ENCODE measurements at regions of chr10 and their contacts with region 1.

Region 1: GRCh38 chr10:45672181-45673073 is at the start of gene ZFAND4:
- DNase-seq: peak; percentile 82
- ATAC-seq: peak; percentile 97
- H3K4me3 ChIP-seq: peak within 1 kb of the TSS; percentile 82
- H3K27ac ChIP-seq: peak within 1 kb of the TSS; percentile 54
- H3K4me1 ChIP-seq: peaks cover 7% of the 10 kb centered on the region
- H3K27me3 ChIP-seq: no peaks in the 10 kb centered on the region
- CTCF ChIP-seq: peak; percentile 56 to 84 (median 64); a peak in 4 of 6 replicates
- EP300 ChIP-seq: peak in 1 of 2 experiments; percentile 35; a peak in 1 of 4 replicates
- POLR2A ChIP-seq: peak; percentile 86
- RAD21 ChIP-seq: peak; percentile 63
- polyA plus RNA-seq, gene ZFAND4: 4.7 to 6.2 TPM

Region 2: GRCh38 chr10:45000752-45001380 is 671.6 kb before region 1 on chr10 and contains the start of gene ZNF22:
- CTCF ChIA-PET with region 1: no interaction called
- POLR2A ChIA-PET with region 1: no interaction called
- RAD21 ChIA-PET with region 1: no interaction called
- SMC1A ChIA-PET with region 1: no interaction called
- in situ Hi-C with region 1: no loop called
- intact Hi-C with region 1: loop called (anchors 5 kb)
- DNase-seq: no peak
- ATAC-seq: peak; percentile 82
- H3K4me3 ChIP-seq: peak within 1 kb of the TSS; percentile 72
- H3K27ac ChIP-seq: peak within 1 kb of the TSS; percentile 74
- H3K4me1 ChIP-seq: peaks cover 10% of the 10 kb centered on the region
- H3K27me3 ChIP-seq: no peaks in the 10 kb centered on the region
- CTCF ChIP-seq: peak in 2 of 3 experiments; percentile 16 to 18; a peak in 3 of 6 replicates
- EP300 ChIP-seq: no peak
- POLR2A ChIP-seq: peak; percentile 88
- RAD21 ChIP-seq: no peak
- polyA plus RNA-seq, gene ZNF22: 47.4 to 74.4 TPM

Region 3: GRCh38 chr10:45280113-45280760 is 392.2 kb before region 1 on chr10:
- CTCF ChIA-PET with region 1: no interaction called
- POLR2A ChIA-PET with region 1: no interaction called
- RAD21 ChIA-PET with region 1: no interaction called
- SMC1A ChIA-PET with region 1: no interaction called
- in situ Hi-C with region 1: no loop called
- intact Hi-C with region 1: no loop called
- DNase-seq: no peak
- ATAC-seq: no peak
- H3K4me3 ChIP-seq: no peak overlapping the region
- H3K27ac ChIP-seq: no peak overlapping the region
- H3K4me1 ChIP-seq: no peaks in the 10 kb centered on the region
- H3K27me3 ChIP-seq: no peaks in the 10 kb centered on the region; a peak in 2 of 4 replicates
- CTCF ChIP-seq: no peak
- EP300 ChIP-seq: no peak
- POLR2A ChIP-seq: no peak
- RAD21 ChIP-seq: no peak

Region 4: GRCh38 chr10:45558425-45558824 is 114.0 kb before region 1 on chr10:
- CTCF ChIA-PET with region 1: no interaction called
- POLR2A ChIA-PET with region 1: no interaction called
- RAD21 ChIA-PET with region 1: no interaction called
- SMC1A ChIA-PET with region 1: no interaction called
- in situ Hi-C with region 1: no loop called
- intact Hi-C with region 1: no loop called
- DNase-seq: no peak
- ATAC-seq: no peak
- H3K4me3 ChIP-seq: no peak overlapping the region
- H3K27ac ChIP-seq: no peak overlapping the region
- H3K4me1 ChIP-seq: peaks cover 19% of the 10 kb centered on the region; the same call in 1 of the 2 replicates
- H3K27me3 ChIP-seq: no peaks in the 10 kb centered on the region
- CTCF ChIP-seq: no peak
- EP300 ChIP-seq: no peak
- POLR2A ChIP-seq: no peak
- RAD21 ChIP-seq: no peak

Region 5: DNA sequence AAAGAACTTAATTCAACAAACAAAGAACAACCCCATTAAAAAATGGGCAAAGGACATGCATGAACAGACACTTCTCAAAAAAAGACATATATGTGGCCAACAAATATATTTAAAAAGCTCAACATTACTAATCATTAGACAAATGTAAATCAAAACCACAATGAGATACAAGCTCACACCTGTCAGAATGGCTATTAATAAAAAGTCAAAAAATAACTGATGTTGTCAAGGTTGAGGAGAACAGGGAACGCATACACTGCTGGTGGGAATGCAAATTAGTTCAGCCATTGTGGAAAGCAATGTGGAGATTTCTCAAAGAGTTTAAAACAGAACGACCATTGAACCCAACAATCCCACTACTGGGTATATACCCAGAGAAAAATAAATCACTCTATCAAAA is 19.0 kb before region 1 on chr10:
- CTCF ChIA-PET with region 1: interaction called, 8 read pairs
- POLR2A ChIA-PET with region 1: interaction called, 4 read pairs
- RAD21 ChIA-PET with region 1: interaction called, 10 read pairs
- SMC1A ChIA-PET with region 1: interaction called, 12 read pairs
- in situ Hi-C with region 1: no loop called
- intact Hi-C with region 1: no loop called
- DNase-seq: no peak
- ATAC-seq: peak; percentile 58
- H3K4me3 ChIP-seq: peak overlapping the region; percentile 64; the same call in 1 of the 2 replicates
- H3K27ac ChIP-seq: peak overlapping the region; percentile 79
- H3K4me1 ChIP-seq: peaks cover 19% of the 10 kb centered on the region; the same call in 1 of the 2 replicates
- H3K27me3 ChIP-seq: no peaks in the 10 kb centered on the region
- CTCF ChIP-seq: no peak
- EP300 ChIP-seq: no peak; a peak in 1 of 4 replicates
- POLR2A ChIP-seq: no peak
- RAD21 ChIP-seq: no peak

Region 6: GRCh38 chr10:47104786-47105385 is 1432.5 kb after region 1 on chr10:
- CTCF ChIA-PET with region 1: no interaction called
- POLR2A ChIA-PET with region 1: no interaction called
- RAD21 ChIA-PET with region 1: no interaction called
- SMC1A ChIA-PET with region 1: no interaction called
- in situ Hi-C with region 1: no loop called
- intact Hi-C with region 1: no loop called
- DNase-seq: no peak
- ATAC-seq: no peak
- H3K4me3 ChIP-seq: no peak overlapping the region
- H3K27ac ChIP-seq: no peak overlapping the region
- H3K4me1 ChIP-seq: no peaks in the 10 kb centered on the region
- H3K27me3 ChIP-seq: peaks cover 0 to 2% of the 10 kb centered on the region in 2 experiments; a peak in 2 of 4 replicates
- CTCF ChIP-seq: no peak
- EP300 ChIP-seq: no peak
- POLR2A ChIP-seq: no peak
- RAD21 ChIP-seq: no peak

Measured in GM12878 (cell line).